Lower leg skin (tissue), 4 donors: ENCODE measurements at regions of chr19 and their contacts with region 1.

Region 1: GRCh38 chr19:48993175-48994034 is at the starts of genes GYS1 and RUVBL2:
- DNase-seq: peak; percentile 99 to 100
- H3K4me3 ChIP-seq: peak within 1 kb of the TSS; percentile 91
- CTCF ChIP-seq: peak in 2 of 3 donors; percentile 29 to 99
- POLR2A ChIP-seq: peak in 1 of 2 donors; percentile 29
- total RNA-seq, gene GYS1: 16.4 to 33.3 (median 20.5) TPM
- total RNA-seq, gene RUVBL2: 61.3 to 83.8 (median 83.3) TPM

Region 2: DNA sequence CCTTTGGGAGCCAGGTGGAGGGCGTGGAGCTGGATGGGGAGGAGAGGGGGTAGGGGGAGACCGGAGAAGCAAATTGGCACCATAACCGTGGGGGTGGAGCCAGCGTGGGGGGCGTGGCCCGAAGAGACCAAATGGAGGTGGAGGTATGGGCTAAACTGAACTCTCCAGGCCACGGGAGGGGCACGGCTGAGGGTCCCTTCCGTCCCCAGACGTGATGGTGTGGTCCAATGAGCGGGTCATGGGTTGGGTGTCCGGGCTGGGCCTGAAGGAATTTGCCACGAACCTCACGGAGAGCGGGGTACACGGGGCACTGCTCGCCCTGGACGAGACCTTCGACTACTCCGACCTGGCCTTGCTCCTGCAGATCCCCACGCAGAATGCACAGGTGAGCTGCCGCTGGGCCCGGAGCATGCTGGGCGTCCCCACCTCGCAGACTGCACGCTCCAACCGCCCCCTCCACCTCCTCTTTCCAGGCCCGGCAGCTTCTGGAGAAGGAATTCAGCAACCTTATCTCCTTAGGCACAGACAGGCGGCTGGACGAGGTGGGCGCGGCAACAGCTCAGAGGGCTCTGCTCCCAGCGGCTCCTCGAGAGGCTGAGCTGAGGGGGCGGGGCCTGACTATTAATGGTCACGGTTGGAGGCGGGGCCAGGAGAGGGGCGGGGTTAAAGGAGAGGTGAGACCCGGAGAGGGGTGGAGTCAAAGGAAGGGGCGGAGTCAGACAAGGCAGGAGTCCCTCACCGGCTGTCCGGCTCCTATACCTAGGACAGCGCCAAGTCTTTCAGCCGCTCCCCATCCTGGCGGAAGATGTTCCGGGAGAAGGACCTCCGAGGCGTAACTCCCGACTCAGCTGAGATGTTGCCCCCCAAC is 155.6 kb after region 1 on chr19:
- intact Hi-C with region 1: loop called (anchors 10 kb)
- DNase-seq: peak; percentile 96 to 99
- H3K4me3 ChIP-seq: peak overlapping the region; percentile 63
- CTCF ChIP-seq: no peak
- POLR2A ChIP-seq: no peak